ENCODE measurements at regions of chr12 and their contacts with region 1.

Region 1: DNA sequence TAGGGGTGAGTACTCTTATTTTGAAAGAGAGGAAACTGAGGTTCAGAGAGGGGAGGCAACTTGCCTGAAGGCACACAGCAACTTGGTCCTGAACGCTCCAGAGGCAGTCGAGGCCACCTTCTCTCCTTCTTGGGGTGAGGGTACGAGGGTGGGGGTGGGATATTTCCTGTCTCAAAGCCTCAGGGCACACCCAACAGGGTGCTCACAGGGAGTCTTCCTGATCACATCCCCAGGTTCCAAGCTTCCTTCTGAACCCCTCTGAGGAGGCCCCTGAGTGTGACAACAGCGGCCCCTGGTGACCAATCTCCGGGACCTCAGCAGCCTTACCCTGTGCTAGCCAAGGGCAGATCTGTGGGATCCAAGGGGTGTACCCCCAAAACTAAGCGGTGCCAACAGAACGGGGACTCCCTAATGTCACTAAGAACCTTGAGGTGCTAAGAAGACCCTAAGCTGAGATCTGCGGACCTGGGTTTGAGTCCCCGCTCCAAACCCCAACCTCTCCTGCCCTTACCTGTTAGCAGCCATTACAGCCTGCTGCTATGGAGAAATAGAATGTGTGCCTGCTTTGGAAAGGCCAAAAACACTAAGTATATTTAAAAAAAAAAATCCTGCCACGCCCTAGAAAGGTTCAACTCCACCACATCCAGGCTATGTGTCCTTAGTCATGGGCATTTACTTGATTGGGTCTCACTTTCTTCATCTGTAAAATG is 57.9 kb downstream of the TRPV4 start:
- DNase-seq: peak; percentile 79
- H3K4me3 ChIP-seq: no peak overlapping the region
- H3K27ac ChIP-seq: no peak overlapping the region
- H3K4me1 ChIP-seq: no peaks in the 10 kb centered on the region
- H3K27me3 ChIP-seq: no peaks in the 10 kb centered on the region
- CTCF ChIP-seq: peak; percentile 81

Region 2: GRCh38 chr12:109428037-109428629 is 347.2 kb before region 1 on chr12:
- intact Hi-C with region 1: loop called (anchors 5 kb)
- DNase-seq: peak; percentile 83
- H3K4me3 ChIP-seq: no peak overlapping the region
- H3K27ac ChIP-seq: no peak overlapping the region
- H3K4me1 ChIP-seq: no peaks in the 10 kb centered on the region
- H3K27me3 ChIP-seq: no peaks in the 10 kb centered on the region
- CTCF ChIP-seq: peak; percentile 99

Region 3: DNA sequence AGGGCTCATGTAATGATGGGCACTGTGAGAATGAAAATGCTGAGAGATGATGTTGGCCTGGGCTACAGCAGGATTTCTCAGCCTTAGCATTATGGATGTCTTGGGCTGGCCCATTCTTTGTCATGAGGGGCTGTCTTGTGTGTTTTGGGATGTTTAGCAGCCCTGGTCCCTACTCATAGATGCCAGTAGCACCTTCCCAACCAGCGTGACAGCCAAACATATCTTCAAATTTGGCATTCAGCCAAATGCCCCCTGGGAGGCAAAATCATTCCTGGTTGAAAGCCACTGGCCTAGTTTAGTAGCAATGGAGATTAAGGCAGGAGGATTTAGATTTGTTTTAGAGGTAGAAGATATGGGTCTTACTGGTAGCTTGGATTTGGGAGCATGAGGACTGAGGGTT is 271.3 kb before region 1 on chr12:
- intact Hi-C with region 1: no loop called
- DNase-seq: no peak
- H3K4me3 ChIP-seq: no peak overlapping the region
- H3K27ac ChIP-seq: no peak overlapping the region
- H3K4me1 ChIP-seq: no peaks in the 10 kb centered on the region
- H3K27me3 ChIP-seq: no peaks in the 10 kb centered on the region
- CTCF ChIP-seq: no peak

Region 4: GRCh38 chr12:109518820-109519665 is 256.3 kb before region 1 on chr12:
- intact Hi-C with region 1: loop called (anchors 2 kb)
- DNase-seq: peak; percentile 69
- H3K4me3 ChIP-seq: no peak overlapping the region
- H3K27ac ChIP-seq: peak overlapping the region; percentile 19
- H3K4me1 ChIP-seq: no peaks in the 10 kb centered on the region
- H3K27me3 ChIP-seq: no peaks in the 10 kb centered on the region
- CTCF ChIP-seq: peak; percentile 83

Region 5: GRCh38 chr12:109597795-109598427 is 177.4 kb before region 1 on chr12:
- intact Hi-C with region 1: loop called (anchors 1 kb)
- DNase-seq: peak; percentile 88
- H3K4me3 ChIP-seq: no peak overlapping the region
- H3K27ac ChIP-seq: no peak overlapping the region
- H3K4me1 ChIP-seq: no peaks in the 10 kb centered on the region
- H3K27me3 ChIP-seq: no peaks in the 10 kb centered on the region
- CTCF ChIP-seq: peak; percentile 93